ENCODE measurements at regions of chr11 and their contacts with region 1.

Region 1: DNA sequence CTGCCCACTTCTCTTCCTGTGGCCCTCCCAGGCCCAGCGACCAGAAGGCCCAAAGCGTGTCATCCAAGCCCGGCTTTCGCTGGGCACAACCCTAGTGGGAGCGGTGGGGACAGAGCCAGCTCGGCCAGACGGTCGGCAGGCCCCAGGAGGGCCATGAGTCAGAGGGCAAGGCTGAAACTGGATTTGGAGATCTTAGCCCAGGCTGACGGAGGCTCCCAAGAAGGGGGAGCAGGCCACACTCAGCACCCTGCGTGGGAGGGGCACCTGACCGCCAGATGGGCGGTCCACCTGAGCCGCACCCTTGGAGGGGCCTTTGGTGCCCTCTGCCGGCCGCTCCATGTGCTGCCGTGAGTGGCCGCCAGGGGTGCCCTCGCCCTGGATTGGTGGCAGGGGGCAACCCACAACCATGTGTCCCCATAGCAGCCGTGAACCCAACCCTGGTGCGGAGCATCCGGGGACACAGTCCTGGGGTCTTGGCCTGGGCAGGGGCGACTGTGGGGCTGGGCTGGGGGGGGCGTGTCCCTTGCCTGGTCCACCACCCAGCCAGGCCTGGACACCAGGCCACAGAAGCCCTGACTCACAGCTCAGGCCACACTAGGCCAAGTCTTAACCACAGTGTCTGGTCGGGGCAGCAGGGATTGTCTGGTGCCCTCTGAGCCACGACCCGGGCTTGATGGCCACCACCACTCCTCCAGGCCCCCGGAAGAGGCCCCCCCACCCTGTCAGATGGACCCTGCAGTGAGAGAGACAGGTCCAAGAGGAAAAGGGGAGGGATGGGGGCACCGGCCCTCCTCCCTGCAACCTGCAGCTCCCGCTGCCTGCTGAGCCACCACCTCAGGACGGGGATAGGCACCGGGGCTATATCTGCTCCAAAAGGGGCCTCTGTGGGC is 19.2 kb upstream of the TALDO1 start:
- DNase-seq: peak; percentile 66 to 98
- H3K4me3 ChIP-seq: no peak overlapping the region
- H3K27ac ChIP-seq: no peak overlapping the region
- H3K4me1 ChIP-seq: peaks cover 0 to 19% (median 12%) of the 10 kb centered on the region in 4 experiments; a peak in 5 of 7 replicates
- H3K27me3 ChIP-seq: peaks cover 0 to 2% (median 0%) of the 10 kb centered on the region in 4 experiments; a peak in 2 of 7 replicates
- CTCF ChIP-seq: peak in 2 of 3 experiments; percentile 98 to 100; a peak in 3 of 4 replicates
- EP300 ChIP-seq: no peak
- POLR2A ChIP-seq: no peak; a peak in 1 of 3 replicates
- RAD21 ChIP-seq: peak; percentile 82 to 92

Region 2: GRCh38 chr11:597166-597725 is 130.9 kb before region 1 on chr11:
- CTCF ChIA-PET with region 1: no interaction called
- POLR2A ChIA-PET with region 1: no interaction called
- DNase-seq: peak in 1 of 2 experiments; percentile 77
- H3K4me3 ChIP-seq: no peak overlapping the region
- H3K27ac ChIP-seq: no peak overlapping the region
- H3K4me1 ChIP-seq: no peaks in the 10 kb centered on the region
- H3K27me3 ChIP-seq: no peaks in the 10 kb centered on the region
- CTCF ChIP-seq: peak; percentile 60 to 83 (median 76)
- EP300 ChIP-seq: no peak
- POLR2A ChIP-seq: no peak
- RAD21 ChIP-seq: peak; percentile 27 to 52

Region 3: GRCh38 chr11:613369-614268 is 114.5 kb before region 1 on chr11:
- CTCF ChIA-PET with region 1: interaction called, 11 read pairs
- POLR2A ChIA-PET with region 1: interaction called, 3 read pairs
- DNase-seq: peak; percentile 64 to 86
- H3K4me3 ChIP-seq: peak overlapping the region in 1 of 4 experiments; percentile 32; a peak in 1 of 8 replicates
- H3K27ac ChIP-seq: no peak overlapping the region
- H3K4me1 ChIP-seq: peaks cover 0 to 15% (median 3%) of the 10 kb centered on the region in 4 experiments; a peak in 5 of 7 replicates
- H3K27me3 ChIP-seq: no peaks in the 10 kb centered on the region
- CTCF ChIP-seq: no peak
- EP300 ChIP-seq: no peak
- POLR2A ChIP-seq: no peak; a peak in 1 of 3 replicates
- RAD21 ChIP-seq: no peak

Region 4: GRCh38 chr11:629237-629583 is 98.9 kb before region 1 on chr11:
- CTCF ChIA-PET with region 1: no interaction called
- POLR2A ChIA-PET with region 1: no interaction called
- DNase-seq: peak in 1 of 2 experiments; percentile 46
- H3K4me3 ChIP-seq: no peak overlapping the region
- H3K27ac ChIP-seq: no peak overlapping the region
- H3K4me1 ChIP-seq: peaks cover 0 to 6% (median under 1%) of the 10 kb centered on the region in 4 experiments; a peak in 2 of 7 replicates
- H3K27me3 ChIP-seq: peaks cover 3 to 14% (median 10%) of the 10 kb centered on the region in 4 experiments; a peak in 6 of 7 replicates
- CTCF ChIP-seq: peak; percentile 5 to 25 (median 14); a peak in 2 of 4 replicates
- EP300 ChIP-seq: no peak
- POLR2A ChIP-seq: no peak
- RAD21 ChIP-seq: peak in 1 of 2 experiments; percentile 37; a peak in 3 of 4 replicates

Region 5: DNA sequence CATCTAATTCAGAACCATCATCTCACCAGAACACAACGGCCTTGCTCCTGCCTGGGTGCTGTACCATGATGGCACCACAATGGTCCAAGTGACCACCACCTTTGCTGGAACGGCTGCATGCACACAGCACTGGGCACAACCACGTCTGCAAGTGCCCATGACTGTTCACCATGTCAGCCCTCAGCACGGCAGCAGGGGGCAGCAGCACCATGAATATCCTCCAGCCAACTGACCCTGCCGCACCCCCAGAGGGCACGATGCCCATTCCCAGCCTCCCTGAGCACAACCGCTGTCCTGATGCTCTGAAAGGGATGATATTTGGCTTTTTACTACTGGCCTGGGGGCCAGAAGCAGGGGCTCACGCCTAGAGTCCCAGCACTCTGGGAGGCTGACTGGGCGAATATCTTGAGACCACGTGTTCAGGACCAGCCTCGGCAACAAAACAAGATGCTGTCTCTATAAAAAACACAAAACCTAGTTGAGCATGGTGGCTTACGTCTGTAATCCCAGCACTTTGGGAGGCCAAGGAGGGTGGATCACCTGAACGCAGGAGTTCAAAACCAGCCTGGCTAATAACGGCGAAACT is 65.3 kb before region 1 on chr11:
- CTCF ChIA-PET with region 1: interaction called, 24 read pairs
- POLR2A ChIA-PET with region 1: no interaction called
- DNase-seq: peak in 1 of 2 experiments; percentile 83
- H3K4me3 ChIP-seq: no peak overlapping the region
- H3K27ac ChIP-seq: no peak overlapping the region
- H3K4me1 ChIP-seq: no peaks in the 10 kb centered on the region
- H3K27me3 ChIP-seq: no peaks in the 10 kb centered on the region
- CTCF ChIP-seq: peak; percentile 93 to 96 (median 94)
- EP300 ChIP-seq: no peak
- POLR2A ChIP-seq: no peak
- RAD21 ChIP-seq: peak; percentile 87 to 90

Region 6: DNA sequence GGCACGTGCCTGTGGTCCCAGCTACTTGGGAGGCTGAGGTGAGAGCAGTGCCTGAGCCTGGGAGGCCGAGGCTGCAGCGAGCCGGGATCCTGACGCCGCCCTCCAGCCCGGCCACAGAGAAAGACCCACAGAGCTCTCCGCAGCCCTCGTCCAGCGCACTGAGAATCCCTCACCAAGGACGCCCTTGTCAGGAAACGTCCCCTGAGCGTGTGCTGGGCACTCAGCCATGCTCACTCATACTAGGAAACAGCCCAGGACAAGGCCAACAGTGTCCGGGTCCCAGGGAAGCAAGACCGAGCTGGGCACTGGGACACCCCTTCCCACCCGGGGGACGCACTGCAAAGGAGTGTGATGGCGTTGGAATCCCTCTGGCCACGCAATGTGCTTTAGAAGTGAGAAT is 47.6 kb before region 1 on chr11:
- CTCF ChIA-PET with region 1: interaction called, 13 read pairs
- POLR2A ChIA-PET with region 1: no interaction called
- DNase-seq: no peak
- H3K4me3 ChIP-seq: no peak overlapping the region
- H3K27ac ChIP-seq: no peak overlapping the region
- H3K4me1 ChIP-seq: peaks cover 0 to 2% (median 0%) of the 10 kb centered on the region in 4 experiments; a peak in 3 of 7 replicates
- H3K27me3 ChIP-seq: no peaks in the 10 kb centered on the region
- CTCF ChIP-seq: no peak
- EP300 ChIP-seq: no peak
- POLR2A ChIP-seq: no peak
- RAD21 ChIP-seq: no peak

Region 7: DNA sequence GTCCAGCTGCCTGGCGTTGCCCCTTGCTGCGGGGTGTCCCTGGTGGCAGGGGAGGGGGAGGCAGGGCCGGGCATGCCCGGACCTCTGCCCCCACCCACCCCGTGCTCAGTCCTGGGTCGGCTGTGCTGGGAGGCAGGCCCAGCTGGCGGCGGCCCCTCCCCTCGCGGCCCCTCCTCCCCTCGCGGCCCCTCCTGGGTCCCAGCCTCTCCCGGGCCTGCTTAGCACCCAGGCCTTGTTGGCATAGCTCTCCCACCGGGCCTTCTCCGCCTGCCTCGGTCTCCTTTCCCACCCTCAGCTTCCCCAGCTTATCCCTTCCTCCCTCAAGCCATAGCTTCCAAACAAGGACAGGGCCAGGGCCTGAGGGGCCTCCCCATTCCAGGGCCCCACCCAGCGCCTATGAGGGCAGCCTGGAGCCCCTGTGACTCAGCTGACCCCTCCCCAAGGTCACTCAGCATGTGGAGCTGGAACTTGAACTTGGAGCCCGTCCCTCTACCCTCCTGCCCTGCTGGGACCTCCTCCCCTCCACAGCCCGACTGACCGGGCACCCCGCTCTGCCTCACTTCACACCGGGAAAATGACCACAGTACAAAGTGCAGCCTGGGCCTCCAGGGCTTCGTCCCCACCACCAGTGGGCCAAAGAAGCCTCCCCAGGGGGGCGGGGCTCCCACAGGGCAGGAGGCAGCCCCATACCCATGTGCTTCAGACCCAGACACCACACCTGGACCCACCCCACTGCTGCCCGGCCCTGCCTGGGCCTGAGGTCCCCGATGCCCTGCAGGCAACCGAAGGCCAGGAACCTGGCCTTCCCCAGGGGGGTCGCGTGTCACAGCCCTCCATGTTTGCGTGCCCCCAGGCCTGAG is 20.9 kb before region 1 on chr11:
- CTCF ChIA-PET with region 1: interaction called, 22 read pairs
- POLR2A ChIA-PET with region 1: interaction called, 16 read pairs
- DNase-seq: no peak
- H3K4me3 ChIP-seq: peak overlapping the region; percentile 38 to 64 (median 49)
- H3K27ac ChIP-seq: no peak overlapping the region
- H3K4me1 ChIP-seq: peaks cover 0 to 48% (median 33%) of the 10 kb centered on the region in 4 experiments; a peak in 6 of 7 replicates
- H3K27me3 ChIP-seq: no peaks in the 10 kb centered on the region
- CTCF ChIP-seq: no peak; a peak in 1 of 4 replicates
- EP300 ChIP-seq: no peak
- POLR2A ChIP-seq: no peak
- RAD21 ChIP-seq: no peak

Region 8: DNA sequence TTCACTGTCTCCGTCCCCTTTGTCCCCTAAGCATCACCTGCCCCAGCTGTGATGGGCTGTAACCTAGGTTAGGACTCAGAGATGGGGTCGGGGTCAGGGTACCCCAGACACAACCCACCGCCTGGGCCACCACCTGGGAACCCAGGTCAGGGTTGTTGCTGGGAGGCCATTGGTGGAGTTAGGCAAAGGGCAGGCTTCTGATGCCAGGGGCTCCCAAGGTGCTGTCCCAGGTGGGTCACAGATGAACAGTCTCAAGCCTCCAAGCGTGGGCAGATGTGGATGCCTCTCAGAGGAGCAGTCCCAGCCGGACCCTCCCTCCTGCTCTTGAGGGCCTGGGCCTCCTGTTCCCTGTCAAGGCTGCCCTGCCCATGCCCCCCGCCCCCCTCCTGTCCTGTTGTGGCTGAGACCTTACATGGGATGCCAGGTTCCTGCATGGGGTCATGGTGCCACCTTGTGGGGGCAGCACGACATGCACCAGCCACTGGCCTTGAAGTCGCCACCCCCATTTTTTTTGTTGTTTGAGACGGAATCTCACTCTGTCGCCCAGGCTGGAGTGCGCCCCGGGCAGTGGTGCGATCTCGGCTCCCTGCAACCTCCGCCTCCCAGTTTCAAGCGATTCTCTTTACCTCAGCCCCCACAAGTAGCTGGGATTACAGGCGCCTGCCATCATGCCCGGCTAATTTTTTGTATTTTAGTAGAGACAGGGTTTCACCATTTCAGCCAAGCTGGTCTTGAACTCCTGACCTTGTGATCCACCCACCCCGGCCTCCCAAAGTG is 37.1 kb after region 1 on chr11:
- CTCF ChIA-PET with region 1: interaction called, 395 read pairs
- POLR2A ChIA-PET with region 1: interaction called, 46 read pairs
- DNase-seq: peak in 1 of 2 experiments; percentile 87
- H3K4me3 ChIP-seq: no peak overlapping the region
- H3K27ac ChIP-seq: no peak overlapping the region
- H3K4me1 ChIP-seq: peaks cover 0 to 12% (median 7%) of the 10 kb centered on the region in 4 experiments; a peak in 6 of 7 replicates
- H3K27me3 ChIP-seq: no peaks in the 10 kb centered on the region
- CTCF ChIP-seq: peak; percentile 66 to 94 (median 82)
- EP300 ChIP-seq: no peak
- POLR2A ChIP-seq: peak in 1 of 2 experiments; percentile 60; a peak in 1 of 3 replicates
- RAD21 ChIP-seq: peak; percentile 86 to 87